ENCODE measurements at regions of chr7 and their contacts with region 1.

Region 1: DNA sequence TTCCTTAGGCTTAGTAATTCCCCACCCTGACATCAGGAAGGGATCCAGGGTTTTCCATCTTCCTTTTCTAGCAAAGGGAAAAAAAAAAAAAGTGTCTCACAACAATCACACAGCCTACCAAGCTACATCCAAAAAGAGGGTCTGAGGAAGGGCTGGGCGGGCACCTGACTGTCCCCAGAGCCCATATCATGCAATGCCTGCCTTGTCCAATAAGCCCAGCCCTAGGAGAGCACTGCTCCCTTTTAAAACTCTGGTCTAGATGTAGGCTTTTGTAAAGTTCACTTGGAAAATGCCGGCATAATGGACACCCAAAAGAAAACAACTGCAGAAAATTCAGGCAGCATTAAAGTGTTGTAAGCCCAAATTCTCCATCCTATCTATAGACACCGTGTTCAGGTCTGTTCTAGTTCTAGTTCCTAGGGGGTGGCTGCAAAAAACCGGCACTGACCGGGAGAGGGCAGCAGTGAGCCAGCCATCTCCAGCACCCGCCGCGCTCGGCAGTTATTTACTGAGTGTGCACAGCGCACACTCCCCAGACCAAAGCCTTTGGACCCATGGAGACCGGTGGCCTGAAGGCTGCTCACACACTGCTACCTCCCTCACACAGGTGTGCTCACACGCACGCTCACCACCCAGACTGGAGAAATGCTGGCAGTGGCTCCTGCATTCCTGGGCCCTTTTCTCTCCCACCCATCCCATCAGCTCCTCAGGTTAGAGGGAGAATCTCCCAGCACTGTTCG is 48.7 kb downstream of the PODXL start:
- DNase-seq: peak; percentile 72
- ATAC-seq: peak; percentile 89
- H3K4me3 ChIP-seq: no peak overlapping the region
- H3K27ac ChIP-seq: no peak overlapping the region
- H3K4me1 ChIP-seq: no peaks in the 10 kb centered on the region
- H3K27me3 ChIP-seq: no peaks in the 10 kb centered on the region
- CTCF ChIP-seq: peak; percentile 91

Region 2: GRCh38 chr7:131654668-131655326 is 147.0 kb after region 1 on chr7:
- CTCF ChIA-PET with region 1: no interaction called
- POLR2A ChIA-PET with region 1: no interaction called
- intact Hi-C with region 1: loop called (anchors 1 kb)
- DNase-seq: peak; percentile 83
- ATAC-seq: peak; percentile 95
- H3K4me3 ChIP-seq: no peak overlapping the region
- H3K27ac ChIP-seq: no peak overlapping the region
- H3K4me1 ChIP-seq: peaks cover 10% of the 10 kb centered on the region; the same call in 1 of the 2 replicates
- H3K27me3 ChIP-seq: no peaks in the 10 kb centered on the region
- CTCF ChIP-seq: peak; percentile 85